ENCODE measurements at regions of chr1 and their contacts with region 1.

Region 1: GRCh38 chr1:64163970-64164369 is 39.5 kb upstream of the UBE2U start:
- DNase-seq: peak in 1 of 2 donors; percentile 61
- H3K4me3 ChIP-seq: no peak overlapping the region
- H3K27ac ChIP-seq: peak overlapping the region in 3 of 5 donors; percentile 20 to 71 (median 53)
- H3K4me1 ChIP-seq: peaks cover 0 to 44% (median 36%) of the 10 kb centered on the region in 4 donors
- H3K27me3 ChIP-seq: no peaks in the 10 kb centered on the region
- CTCF ChIP-seq: peak in 2 of 7 experiments; percentile 27 to 34
- EP300 ChIP-seq: no peak
- POLR2A ChIP-seq: no peak

Region 2: GRCh38 chr1:63624911-63625310 is 539.1 kb before region 1 on chr1:
- intact Hi-C with region 1: loop called (anchors 10 kb)
- DNase-seq: no peak
- H3K4me3 ChIP-seq: no peak overlapping the region
- H3K27ac ChIP-seq: no peak overlapping the region
- H3K4me1 ChIP-seq: peaks cover 0 to 9% (median 2%) of the 10 kb centered on the region in 4 donors
- H3K27me3 ChIP-seq: no peaks in the 10 kb centered on the region
- CTCF ChIP-seq: no peak
- EP300 ChIP-seq: no peak
- POLR2A ChIP-seq: no peak

Region 3: DNA sequence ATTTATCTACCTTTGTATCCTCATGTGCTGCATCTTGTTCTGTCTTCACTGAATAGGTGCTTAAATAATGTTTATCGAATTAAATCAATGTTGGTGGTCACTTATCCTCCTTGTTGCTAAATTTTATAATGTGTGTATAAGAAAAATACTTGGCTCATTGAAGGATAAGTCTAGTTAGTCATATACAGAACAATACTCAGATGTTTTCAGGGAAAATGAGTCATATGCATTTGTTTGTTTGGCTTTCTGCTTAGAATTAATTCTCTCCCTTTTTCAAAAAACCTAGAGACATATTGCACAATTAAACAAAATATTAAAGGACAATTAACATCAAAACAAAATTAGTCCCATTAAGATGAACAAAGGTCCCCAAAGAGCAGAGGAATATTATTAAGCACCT is 128.4 kb after region 1 on chr1:
- intact Hi-C with region 1: no loop called
- DNase-seq: no peak
- H3K4me3 ChIP-seq: no peak overlapping the region
- H3K27ac ChIP-seq: no peak overlapping the region
- H3K4me1 ChIP-seq: no peaks in the 10 kb centered on the region
- H3K27me3 ChIP-seq: no peaks in the 10 kb centered on the region
- CTCF ChIP-seq: no peak
- EP300 ChIP-seq: no peak
- POLR2A ChIP-seq: no peak

Measured in stomach (tissue), 19 donors.